K562 (cell line): ENCODE measurements at regions of chr4 and their contacts with region 1.

Region 1: GRCh38 chr4:153466081-153466948 is at the start of gene TMEM131L:
- DNase-seq: peak; percentile 91 to 94 (median 92)
- ATAC-seq: peak; percentile 82
- H3K4me3 ChIP-seq: peak within 1 kb of the TSS; percentile 83
- H3K27ac ChIP-seq: peak within 1 kb of the TSS; percentile 86
- H3K4me1 ChIP-seq: peaks cover 29 to 40% of the 10 kb centered on the region in 2 experiments
- H3K27me3 ChIP-seq: no peaks in the 10 kb centered on the region
- CTCF ChIP-seq: peak; percentile 30 to 68 (median 46); a peak in 3 of 6 replicates
- EP300 ChIP-seq: no peak; the same call in 1 of the 2 replicates
- POLR2A ChIP-seq: peak; percentile 78
- RAD21 ChIP-seq: peak in 1 of 2 experiments; percentile 41; a peak in 2 of 4 replicates
- polyA plus RNA-seq, gene TMEM131L: 1.2 to 1.6 TPM

Region 2: DNA sequence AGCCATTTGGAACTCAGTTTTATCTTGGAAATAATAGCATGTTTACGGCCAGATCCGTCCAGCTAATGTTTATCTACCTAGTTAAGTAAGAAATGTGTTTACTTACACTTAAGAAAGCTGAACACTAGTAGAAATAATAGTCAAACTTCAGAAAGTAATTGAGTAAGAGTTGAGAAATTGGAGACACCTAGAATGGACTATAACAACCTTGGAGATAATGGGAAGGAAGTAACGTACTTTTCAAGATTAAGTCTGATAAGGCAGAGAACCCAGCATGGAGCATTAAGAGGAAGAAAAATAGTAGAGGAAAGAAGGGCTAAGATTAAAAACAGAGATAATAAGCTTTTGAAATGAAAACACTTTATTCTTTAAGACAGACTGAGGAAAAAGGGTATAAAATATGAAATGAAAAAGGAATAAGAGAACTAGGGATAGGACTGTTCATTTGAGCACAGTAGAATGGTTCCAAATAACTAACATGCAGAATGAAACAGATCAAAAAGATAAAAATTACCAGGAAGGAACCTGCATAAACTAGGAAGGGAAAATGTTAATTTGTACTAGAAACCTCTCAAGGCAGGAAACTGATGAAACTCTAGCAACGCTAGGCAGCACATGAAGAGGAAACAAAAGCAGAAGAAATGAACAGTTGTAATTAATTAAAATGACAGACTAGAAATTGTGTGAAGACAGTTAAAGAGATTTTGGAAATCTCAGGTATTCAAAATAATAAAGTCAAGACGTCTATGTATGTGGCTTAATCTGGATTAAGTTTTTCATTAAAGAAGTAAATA is 1002.1 kb before region 1 on chr4:
- CTCF ChIA-PET with region 1: no interaction called
- POLR2A ChIA-PET with region 1: no interaction called
- in situ Hi-C with region 1: no loop called
- intact Hi-C with region 1: no loop called
- DNase-seq: no peak
- ATAC-seq: no peak
- H3K4me3 ChIP-seq: no peak overlapping the region
- H3K27ac ChIP-seq: no peak overlapping the region
- H3K4me1 ChIP-seq: no peaks in the 10 kb centered on the region; a peak in 3 of 5 replicates
- H3K27me3 ChIP-seq: no peaks in the 10 kb centered on the region
- CTCF ChIP-seq: no peak
- EP300 ChIP-seq: peak; percentile 37; the same call in 1 of the 2 replicates
- POLR2A ChIP-seq: no peak
- RAD21 ChIP-seq: no peak

Region 3: GRCh38 chr4:153479101-153479500 is 12.8 kb after region 1 on chr4:
- CTCF ChIA-PET with region 1: no interaction called
- POLR2A ChIA-PET with region 1: interaction called, 11 read pairs
- in situ Hi-C with region 1: no loop called
- intact Hi-C with region 1: no loop called
- DNase-seq: no peak
- ATAC-seq: no peak
- H3K4me3 ChIP-seq: no peak overlapping the region
- H3K27ac ChIP-seq: no peak overlapping the region
- H3K4me1 ChIP-seq: peaks cover 0 to 4% of the 10 kb centered on the region in 2 experiments; a peak in 3 of 5 replicates
- H3K27me3 ChIP-seq: no peaks in the 10 kb centered on the region
- CTCF ChIP-seq: no peak
- EP300 ChIP-seq: no peak
- POLR2A ChIP-seq: no peak
- RAD21 ChIP-seq: no peak

Region 4: GRCh38 chr4:153521999-153522801 is 55.9 kb after region 1 on chr4:
- CTCF ChIA-PET with region 1: no interaction called
- POLR2A ChIA-PET with region 1: no interaction called
- in situ Hi-C with region 1: no loop called
- intact Hi-C with region 1: loop called (anchors 5 kb)
- DNase-seq: no peak
- ATAC-seq: 0 out of 3 replicates have a peak, but pooled peaks have one; percentile 6
- H3K4me3 ChIP-seq: no peak overlapping the region
- H3K27ac ChIP-seq: no peak overlapping the region
- H3K4me1 ChIP-seq: peaks cover 9 to 47% of the 10 kb centered on the region in 2 experiments
- H3K27me3 ChIP-seq: no peaks in the 10 kb centered on the region
- CTCF ChIP-seq: no peak
- EP300 ChIP-seq: no peak
- POLR2A ChIP-seq: no peak
- RAD21 ChIP-seq: no peak